K562 (cell line): ENCODE measurements at regions of chr15 and their contacts with region 1.

Region 1: DNA sequence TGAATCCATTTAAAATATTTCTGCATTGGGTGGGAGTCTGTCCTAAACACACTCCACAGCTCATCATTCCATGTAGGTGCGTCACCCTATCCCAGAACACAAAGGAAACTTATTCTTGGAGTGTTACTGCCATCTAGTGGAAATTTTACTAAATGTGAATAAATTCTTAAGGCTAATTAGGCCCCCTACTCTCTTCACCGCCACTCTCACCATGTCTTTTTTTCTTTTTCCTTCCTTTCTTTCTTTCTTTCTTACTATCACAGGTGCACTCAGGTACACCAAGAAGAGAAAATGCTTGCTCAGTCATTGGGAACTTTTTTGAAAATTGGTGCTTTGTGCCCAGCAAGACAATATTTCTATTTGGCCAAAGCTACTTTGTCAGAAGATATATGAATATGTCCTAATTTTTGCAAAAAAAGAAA is 26.4 kb upstream of the ATP8B4 start:
- DNase-seq: peak; percentile 60 to 79 (median 68)
- ATAC-seq: peak; percentile 87
- H3K4me3 ChIP-seq: no peak overlapping the region
- H3K27ac ChIP-seq: no peak overlapping the region
- H3K4me1 ChIP-seq: peaks cover 0 to 5% of the 10 kb centered on the region in 2 experiments; a peak in 3 of 5 replicates
- H3K27me3 ChIP-seq: no peaks in the 10 kb centered on the region
- CTCF ChIP-seq: peak; percentile 38 to 66 (median 45); a peak in 4 of 6 replicates
- EP300 ChIP-seq: no peak
- POLR2A ChIP-seq: no peak
- RAD21 ChIP-seq: peak; percentile 84 to 88

Region 2: GRCh38 chr15:48861813-48862431 is 1283.5 kb before region 1 on chr15:
- CTCF ChIA-PET with region 1: interaction called, 7 read pairs
- POLR2A ChIA-PET with region 1: interaction called, 3 read pairs
- in situ Hi-C with region 1: loop called (anchors 10 kb)
- intact Hi-C with region 1: loop called (anchors 5 kb)
- DNase-seq: peak; percentile 41 to 76 (median 49)
- ATAC-seq: peak; percentile 77
- H3K4me3 ChIP-seq: no peak overlapping the region
- H3K27ac ChIP-seq: no peak overlapping the region
- H3K4me1 ChIP-seq: peaks cover 0 to 8% of the 10 kb centered on the region in 2 experiments; a peak in 4 of 5 replicates
- H3K27me3 ChIP-seq: no peaks in the 10 kb centered on the region
- CTCF ChIP-seq: peak; percentile 73 to 92 (median 78)
- EP300 ChIP-seq: no peak
- POLR2A ChIP-seq: no peak
- RAD21 ChIP-seq: peak; percentile 99

Region 3: DNA sequence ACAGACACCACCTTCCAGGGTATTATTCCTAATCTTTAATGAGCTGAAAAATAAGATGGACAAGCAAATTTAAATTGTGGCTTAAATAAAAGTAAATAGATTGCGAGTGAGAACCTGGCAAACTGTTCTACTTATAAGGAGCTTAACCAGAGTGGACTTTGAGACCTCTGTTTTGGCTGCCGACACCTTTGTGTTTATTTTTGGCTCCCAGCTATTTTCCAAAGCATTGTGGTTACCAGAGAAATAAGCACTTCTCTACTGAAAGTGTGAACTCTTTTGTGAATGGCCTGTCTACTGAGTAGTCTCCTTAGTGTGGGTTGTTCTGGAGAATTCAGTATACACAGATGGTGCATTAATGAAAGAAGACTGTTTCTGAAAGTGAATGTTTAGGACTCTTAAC is 135.8 kb before region 1 on chr15:
- CTCF ChIA-PET with region 1: no interaction called
- POLR2A ChIA-PET with region 1: no interaction called
- in situ Hi-C with region 1: no loop called
- intact Hi-C with region 1: loop called (anchors 5 kb)
- DNase-seq: no peak
- ATAC-seq: no peak
- H3K4me3 ChIP-seq: no peak overlapping the region
- H3K27ac ChIP-seq: no peak overlapping the region
- H3K4me1 ChIP-seq: no peaks in the 10 kb centered on the region
- H3K27me3 ChIP-seq: no peaks in the 10 kb centered on the region; a peak in 1 of 5 replicates
- CTCF ChIP-seq: no peak
- EP300 ChIP-seq: no peak
- POLR2A ChIP-seq: no peak
- RAD21 ChIP-seq: no peak

Region 4: DNA sequence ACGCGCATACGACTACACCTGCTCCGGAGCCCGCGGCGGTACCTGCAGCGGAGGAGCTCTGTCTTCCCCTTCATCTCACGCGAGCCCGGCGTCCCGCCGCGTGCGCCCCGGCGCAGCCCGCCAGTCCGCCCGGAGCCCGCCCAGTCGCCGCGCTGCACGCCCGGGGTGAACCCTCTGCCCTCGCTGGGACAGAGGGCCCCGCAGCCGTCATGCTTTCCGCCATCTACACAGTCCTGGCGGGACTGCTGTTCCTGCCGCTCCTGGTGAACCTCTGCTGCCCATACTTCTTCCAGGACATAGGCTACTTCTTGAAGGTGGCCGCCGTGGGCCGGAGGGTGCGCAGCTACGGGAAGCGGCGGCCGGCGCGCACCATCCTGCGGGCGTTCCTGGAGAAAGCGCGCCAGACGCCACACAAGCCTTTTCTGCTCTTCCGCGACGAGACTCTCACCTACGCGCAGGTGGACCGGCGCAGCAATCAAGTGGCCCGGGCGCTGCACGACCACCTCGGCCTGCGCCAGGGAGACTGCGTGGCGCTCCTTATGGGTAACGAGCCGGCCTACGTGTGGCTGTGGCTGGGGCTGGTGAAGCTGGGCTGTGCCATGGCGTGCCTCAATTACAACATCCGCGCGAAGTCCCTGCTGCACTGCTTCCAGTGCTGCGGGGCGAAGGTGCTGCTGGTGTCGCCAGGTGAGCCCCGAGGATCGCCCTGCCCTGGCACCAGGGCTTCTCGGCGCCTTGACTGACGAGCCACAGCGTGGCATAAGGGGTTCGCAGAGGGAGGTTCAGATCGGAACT is 37.0 kb after region 1 on chr15:
- CTCF ChIA-PET with region 1: no interaction called
- POLR2A ChIA-PET with region 1: interaction called, 3 read pairs
- in situ Hi-C with region 1: no loop called
- intact Hi-C with region 1: loop called (anchors 2 kb)
- DNase-seq: peak in 3 of 4 experiments; percentile 40 to 50 (median 46)
- ATAC-seq: peak; percentile 80
- H3K4me3 ChIP-seq: peak overlapping the region; percentile 65
- H3K27ac ChIP-seq: peak overlapping the region; percentile 38; the same call in 1 of the 3 replicates
- H3K4me1 ChIP-seq: peaks cover 16 to 21% of the 10 kb centered on the region in 2 experiments; a peak in 4 of 5 replicates
- H3K27me3 ChIP-seq: no peaks in the 10 kb centered on the region
- CTCF ChIP-seq: no peak
- EP300 ChIP-seq: no peak
- POLR2A ChIP-seq: no peak
- RAD21 ChIP-seq: no peak

Region 5: GRCh38 chr15:50321680-50322210 is 176.3 kb after region 1 on chr15:
- CTCF ChIA-PET with region 1: interaction called, 16 read pairs
- POLR2A ChIA-PET with region 1: no interaction called
- in situ Hi-C with region 1: loop called (anchors 5 kb)
- intact Hi-C with region 1: loop called (anchors 1 kb)
- DNase-seq: no peak
- ATAC-seq: no peak
- H3K4me3 ChIP-seq: no peak overlapping the region
- H3K27ac ChIP-seq: no peak overlapping the region
- H3K4me1 ChIP-seq: no peaks in the 10 kb centered on the region
- H3K27me3 ChIP-seq: no peaks in the 10 kb centered on the region
- CTCF ChIP-seq: no peak
- EP300 ChIP-seq: no peak
- POLR2A ChIP-seq: no peak
- RAD21 ChIP-seq: no peak